ENCODE measurements at regions of chr4 and their contacts with region 1.

Region 1: DNA sequence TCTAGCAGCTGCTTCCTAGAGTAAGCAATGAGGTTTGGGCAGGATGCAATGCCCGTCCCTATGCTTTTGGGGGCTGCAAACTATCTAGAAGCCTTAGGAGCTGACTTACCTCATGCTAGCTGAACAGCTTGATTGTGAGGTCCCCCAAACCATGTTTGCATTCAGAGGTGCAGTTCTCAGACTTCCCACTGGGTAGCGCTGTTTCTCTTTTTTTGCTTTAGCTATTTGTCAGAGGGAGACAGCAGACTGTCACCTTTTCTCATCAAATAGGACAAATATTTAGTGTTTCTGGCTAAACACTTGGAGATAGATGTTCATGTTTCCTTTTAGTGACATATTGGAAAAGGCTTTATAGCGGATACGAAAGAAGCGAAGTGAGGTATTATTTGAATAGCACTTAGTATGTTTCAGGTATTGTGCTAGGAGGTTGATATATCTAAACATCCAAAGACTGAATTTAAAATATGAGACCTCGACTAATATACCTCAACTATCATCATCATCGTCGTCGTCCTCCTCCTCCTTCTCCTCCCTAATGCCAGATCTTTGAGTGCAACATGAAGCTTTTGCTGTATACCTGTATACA is 18.7 kb upstream of the TMEM192 start:
- DNase-seq: peak; percentile 22 to 67 (median 59)
- H3K4me3 ChIP-seq: no peak overlapping the region
- H3K27ac ChIP-seq: no peak overlapping the region
- H3K4me1 ChIP-seq: no peaks in the 10 kb centered on the region
- H3K27me3 ChIP-seq: no peaks in the 10 kb centered on the region
- CTCF ChIP-seq: peak; percentile 64 to 80 (median 79)
- EP300 ChIP-seq: no peak
- POLR2A ChIP-seq: no peak

Region 2: GRCh38 chr4:165207431-165208220 is 76.3 kb after region 1 on chr4 and contains the start of gene KLHL2:
- intact Hi-C with region 1: loop called in 1 of 4 experiments (anchors 5 kb)
- DNase-seq: peak; percentile 68 to 84 (median 78)
- H3K4me3 ChIP-seq: peak within 1 kb of the TSS; percentile 65
- H3K27ac ChIP-seq: peak within 1 kb of the TSS; percentile 42 to 72
- H3K4me1 ChIP-seq: peaks cover 4% of the 10 kb centered on the region
- H3K27me3 ChIP-seq: no peaks in the 10 kb centered on the region
- CTCF ChIP-seq: no peak
- EP300 ChIP-seq: no peak
- POLR2A ChIP-seq: no peak
- total RNA-seq, gene KLHL2: 8.1 to 19.3 (median 11.7) TPM

Region 3: DNA sequence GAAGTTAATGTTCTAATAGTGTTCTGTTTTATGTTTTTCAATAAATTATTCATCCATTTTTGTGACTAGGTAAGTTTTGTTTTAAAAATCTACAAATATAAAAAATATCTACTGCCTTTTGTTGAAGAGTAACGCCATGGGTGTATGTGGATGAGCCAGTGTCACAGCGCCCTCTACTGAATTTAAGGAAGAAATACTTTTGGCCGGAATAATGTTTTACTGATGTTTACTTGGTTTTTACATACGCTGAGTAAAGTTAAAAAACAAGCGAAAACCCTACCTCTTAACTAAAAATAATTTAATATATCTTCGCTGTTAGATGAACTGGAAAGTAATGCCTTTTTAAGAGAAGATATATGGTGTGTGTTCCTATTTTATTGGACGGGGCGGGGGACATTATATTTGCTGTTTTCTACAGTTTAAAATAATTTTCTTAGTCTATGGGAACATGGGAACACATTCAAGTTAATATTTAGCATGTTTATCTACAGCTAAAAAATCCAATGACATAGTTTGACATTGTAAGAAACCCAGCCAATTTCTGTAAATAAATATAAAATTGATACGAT is 333.6 kb after region 1 on chr4:
- intact Hi-C with region 1: loop called (anchors 5 to 10 kb)
- DNase-seq: peak in 1 of 5 donors; percentile 22
- H3K4me3 ChIP-seq: no peak overlapping the region
- H3K27ac ChIP-seq: no peak overlapping the region
- H3K4me1 ChIP-seq: peaks cover 7% of the 10 kb centered on the region
- H3K27me3 ChIP-seq: no peaks in the 10 kb centered on the region
- CTCF ChIP-seq: peak; percentile 65 to 85 (median 76)
- EP300 ChIP-seq: no peak
- POLR2A ChIP-seq: no peak